Activated B cell treated with CpG ODN at 0.5 μM for 24 hours (primary cell): ENCODE measurements at regions of chr6 and their contacts with region 1.

Region 1: DNA sequence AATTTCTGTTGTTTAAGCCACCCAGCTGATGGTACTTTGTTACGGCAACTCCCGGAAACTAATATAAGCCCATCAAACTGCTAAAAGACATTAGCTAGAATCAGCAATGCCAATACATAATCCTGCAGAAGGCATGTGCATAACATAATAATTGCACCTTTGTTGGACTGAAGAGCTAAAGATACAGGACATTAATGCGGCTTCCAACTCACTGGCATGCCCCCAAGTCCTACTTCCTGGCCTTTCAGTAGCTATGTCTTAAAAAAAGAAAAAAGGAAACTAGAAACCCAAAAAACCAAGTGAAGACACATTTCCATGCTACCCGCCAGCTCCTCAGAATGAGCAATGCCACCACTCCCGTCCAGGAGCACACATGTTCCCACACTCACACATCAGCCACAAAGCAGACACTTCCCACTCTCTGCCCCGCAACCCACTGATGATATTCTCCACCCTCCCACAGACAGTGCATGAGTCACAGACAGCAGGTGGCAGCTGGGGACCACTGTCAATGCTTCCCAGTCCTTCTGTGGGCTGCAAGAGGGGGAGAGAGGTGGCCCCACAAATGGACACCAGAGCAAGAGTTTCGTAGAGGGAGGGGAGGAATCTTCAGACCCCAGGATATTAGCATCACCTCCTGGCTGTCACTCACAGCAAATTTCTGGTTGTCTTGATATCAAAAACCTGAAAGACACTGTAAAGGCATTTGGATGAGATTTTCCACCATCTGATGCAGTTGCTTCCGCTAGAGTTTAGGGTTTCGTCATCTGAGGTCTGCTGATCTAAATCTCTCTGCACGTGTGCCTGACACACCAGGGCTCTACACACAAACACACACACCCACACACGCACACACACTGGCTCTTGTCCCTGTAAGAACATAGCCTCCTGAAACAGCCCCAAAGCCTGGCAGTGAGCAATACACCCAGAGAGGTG is 32.8 kb downstream of the GFOD1 start:
- DNase-seq: peak; percentile 37
- ATAC-seq: peak; percentile 81
- H3K4me3 Mint-ChIP-seq: peak overlapping the region; percentile 65
- H3K27ac Mint-ChIP-seq: peak overlapping the region; percentile 85
- H3K4me1 Mint-ChIP-seq: peaks cover 60% of the 10 kb centered on the region
- H3K27me3 Mint-ChIP-seq: no peaks in the 10 kb centered on the region
- CTCF ChIP-seq: no peak

Region 2: GRCh38 chr6:13079096-13079723 is 375.3 kb before region 1 on chr6:
- CTCF ChIA-PET with region 1: no interaction called
- POLR2A ChIA-PET with region 1: no interaction called
- intact Hi-C with region 1: no loop called
- DNase-seq: no peak
- ATAC-seq: no peak
- H3K4me3 Mint-ChIP-seq: no peak overlapping the region
- H3K27ac Mint-ChIP-seq: no peak overlapping the region
- H3K4me1 Mint-ChIP-seq: no peaks in the 10 kb centered on the region
- H3K27me3 Mint-ChIP-seq: peaks cover 17% of the 10 kb centered on the region
- CTCF ChIP-seq: no peak

Region 3: GRCh38 chr6:13272131-13273046 is 182.2 kb before region 1 on chr6:
- CTCF ChIA-PET with region 1: no interaction called
- POLR2A ChIA-PET with region 1: no interaction called
- intact Hi-C with region 1: no loop called
- DNase-seq: peak; percentile 70
- ATAC-seq: peak; percentile 74
- H3K4me3 Mint-ChIP-seq: peak overlapping the region; percentile 95
- H3K27ac Mint-ChIP-seq: peak overlapping the region; percentile 96
- H3K4me1 Mint-ChIP-seq: peaks cover 77% of the 10 kb centered on the region
- H3K27me3 Mint-ChIP-seq: no peaks in the 10 kb centered on the region
- CTCF ChIP-seq: no peak

Region 4: GRCh38 chr6:13427801-13428582 is 26.6 kb before region 1 on chr6:
- CTCF ChIA-PET with region 1: no interaction called
- POLR2A ChIA-PET with region 1: interaction called, 4 read pairs
- intact Hi-C with region 1: loop called (anchors 1 kb)
- DNase-seq: peak; percentile 58
- ATAC-seq: peak; percentile 86
- H3K4me3 Mint-ChIP-seq: peak overlapping the region; percentile 80
- H3K27ac Mint-ChIP-seq: peak overlapping the region; percentile 95
- H3K4me1 Mint-ChIP-seq: peaks cover 68% of the 10 kb centered on the region
- H3K27me3 Mint-ChIP-seq: no peaks in the 10 kb centered on the region
- CTCF ChIP-seq: no peak

Region 5: GRCh38 chr6:13439644-13440043 is 14.9 kb before region 1 on chr6:
- CTCF ChIA-PET with region 1: interaction called, 3 read pairs
- POLR2A ChIA-PET with region 1: no interaction called
- intact Hi-C with region 1: loop called (anchors 2 kb)
- DNase-seq: no peak
- ATAC-seq: no peak
- H3K4me3 Mint-ChIP-seq: no peak overlapping the region
- H3K27ac Mint-ChIP-seq: no peak overlapping the region
- H3K4me1 Mint-ChIP-seq: peaks cover 9% of the 10 kb centered on the region
- H3K27me3 Mint-ChIP-seq: no peaks in the 10 kb centered on the region
- CTCF ChIP-seq: no peak

Region 6: GRCh38 chr6:13470238-13471140 is 15.9 kb after region 1 on chr6:
- CTCF ChIA-PET with region 1: no interaction called
- POLR2A ChIA-PET with region 1: no interaction called
- intact Hi-C with region 1: loop called (anchors 2 kb)
- DNase-seq: no peak
- ATAC-seq: peak; percentile 21
- H3K4me3 Mint-ChIP-seq: no peak overlapping the region
- H3K27ac Mint-ChIP-seq: no peak overlapping the region
- H3K4me1 Mint-ChIP-seq: peaks cover 66% of the 10 kb centered on the region
- H3K27me3 Mint-ChIP-seq: no peaks in the 10 kb centered on the region
- CTCF ChIP-seq: no peak

Region 7: DNA sequence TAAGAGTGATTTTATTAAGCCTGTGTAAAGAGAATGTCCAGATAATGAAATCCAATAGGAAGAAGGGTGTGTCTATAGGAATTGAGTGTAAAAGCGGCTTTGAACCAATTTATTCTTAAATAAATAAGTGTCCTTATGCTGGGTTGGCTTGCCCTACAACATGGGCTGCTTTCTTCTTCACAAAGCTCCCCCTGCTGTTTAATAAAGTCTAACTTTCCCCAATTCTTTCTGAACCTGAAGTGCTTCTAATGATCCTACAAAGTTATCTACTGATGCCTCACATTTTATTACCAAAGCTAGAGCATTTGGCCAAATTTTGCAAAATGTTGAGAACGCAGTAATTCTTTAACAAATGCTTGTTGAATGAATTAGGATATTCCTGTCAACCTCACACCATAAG is 83.5 kb after region 1 on chr6:
- CTCF ChIA-PET with region 1: interaction called, 25 read pairs
- POLR2A ChIA-PET with region 1: no interaction called
- intact Hi-C with region 1: loop called (anchors 1 kb)
- DNase-seq: no peak
- ATAC-seq: peak; percentile 58
- H3K4me3 Mint-ChIP-seq: no peak overlapping the region
- H3K27ac Mint-ChIP-seq: no peak overlapping the region
- H3K4me1 Mint-ChIP-seq: peaks cover 14% of the 10 kb centered on the region
- H3K27me3 Mint-ChIP-seq: no peaks in the 10 kb centered on the region
- CTCF ChIP-seq: no peak

Region 8: GRCh38 chr6:13554929-13555333 is 100.4 kb after region 1 on chr6:
- CTCF ChIA-PET with region 1: no interaction called
- POLR2A ChIA-PET with region 1: no interaction called
- intact Hi-C with region 1: no loop called
- DNase-seq: no peak
- ATAC-seq: no peak
- H3K4me3 Mint-ChIP-seq: no peak overlapping the region
- H3K27ac Mint-ChIP-seq: no peak overlapping the region
- H3K4me1 Mint-ChIP-seq: no peaks in the 10 kb centered on the region
- H3K27me3 Mint-ChIP-seq: no peaks in the 10 kb centered on the region
- CTCF ChIP-seq: no peak

Region 9: GRCh38 chr6:13754644-13755043 is 300.1 kb after region 1 on chr6:
- CTCF ChIA-PET with region 1: no interaction called
- POLR2A ChIA-PET with region 1: no interaction called
- intact Hi-C with region 1: no loop called
- DNase-seq: no peak
- ATAC-seq: no peak
- H3K4me3 Mint-ChIP-seq: no peak overlapping the region
- H3K27ac Mint-ChIP-seq: no peak overlapping the region
- H3K4me1 Mint-ChIP-seq: no peaks in the 10 kb centered on the region
- H3K27me3 Mint-ChIP-seq: no peaks in the 10 kb centered on the region
- CTCF ChIP-seq: no peak